B cell (primary cell): ENCODE measurements at regions of chr21 and their contacts with region 1.

Region 1: DNA sequence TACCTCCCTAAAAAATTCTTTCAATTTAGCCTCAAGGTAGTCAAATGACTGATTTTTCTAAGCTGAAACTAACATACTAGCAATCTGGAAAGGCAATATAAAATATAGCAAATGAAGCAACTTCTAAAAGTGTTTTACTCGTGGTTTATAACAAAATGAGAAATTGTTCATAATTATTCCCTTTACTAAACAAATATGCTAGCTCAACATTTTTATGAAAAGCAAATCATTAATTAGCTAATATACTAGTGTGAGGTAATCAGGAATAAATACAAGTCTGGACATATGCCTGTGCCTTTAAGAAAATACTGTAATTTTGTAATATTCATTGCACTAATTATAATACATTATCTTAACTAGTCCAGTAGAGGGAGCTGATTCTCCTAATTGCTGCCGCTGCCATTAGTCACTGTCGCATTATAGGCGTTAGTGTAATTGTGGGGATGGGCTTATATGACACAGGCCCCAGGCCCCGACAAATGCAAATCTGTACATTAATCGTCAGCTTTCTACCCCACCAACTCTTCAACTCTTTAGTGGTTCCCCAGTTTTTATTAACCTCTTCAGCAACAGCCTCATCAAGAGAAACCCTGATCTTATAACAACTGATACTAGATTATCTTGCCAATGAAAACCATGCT is 160.9 kb downstream of the GABPA start:
- DNase-seq: peak; percentile 59
- ATAC-seq: peak; percentile 67
- H3K4me3 ChIP-seq: no peak overlapping the region
- H3K4me3 Mint-ChIP-seq: no peak overlapping the region
- H3K27ac ChIP-seq: no peak overlapping the region
- H3K27ac Mint-ChIP-seq: no peak overlapping the region
- H3K4me1 ChIP-seq: no peaks in the 10 kb centered on the region
- H3K4me1 Mint-ChIP-seq: peaks cover 3% of the 10 kb centered on the region
- H3K27me3 ChIP-seq: no peaks in the 10 kb centered on the region
- H3K27me3 Mint-ChIP-seq: no peaks in the 10 kb centered on the region
- CTCF ChIP-seq: peak; percentile 83

Region 2: DNA sequence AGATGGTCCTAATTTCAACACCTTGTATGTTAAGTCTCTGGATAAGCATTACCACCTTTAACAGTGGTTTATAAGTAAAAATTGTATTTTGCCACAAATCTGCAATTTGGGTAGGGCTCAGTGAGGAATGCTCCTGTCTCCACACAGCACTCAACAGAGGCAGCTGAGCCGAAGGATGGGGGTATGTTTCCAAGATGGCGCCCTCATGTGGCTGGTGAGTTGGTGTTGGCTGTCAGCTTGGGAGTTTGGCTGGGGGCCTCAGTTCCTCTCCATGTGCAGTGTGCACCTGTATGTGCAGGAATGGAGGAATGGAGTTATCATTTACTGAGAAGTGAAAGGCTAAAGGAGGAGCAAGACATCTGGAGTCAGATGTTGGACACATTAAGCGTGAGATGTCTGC is 24.1 kb before region 1 on chr21:
- CTCF ChIA-PET with region 1: no interaction called
- POLR2A ChIA-PET with region 1: no interaction called
- intact Hi-C with region 1: no loop called
- DNase-seq: no peak
- ATAC-seq: no peak
- H3K4me3 ChIP-seq: no peak overlapping the region
- H3K4me3 Mint-ChIP-seq: no peak overlapping the region
- H3K27ac ChIP-seq: no peak overlapping the region
- H3K27ac Mint-ChIP-seq: no peak overlapping the region
- H3K4me1 ChIP-seq: no peaks in the 10 kb centered on the region
- H3K4me1 Mint-ChIP-seq: no peaks in the 10 kb centered on the region
- H3K27me3 ChIP-seq: no peaks in the 10 kb centered on the region
- H3K27me3 Mint-ChIP-seq: no peaks in the 10 kb centered on the region
- CTCF ChIP-seq: no peak

Region 3: DNA sequence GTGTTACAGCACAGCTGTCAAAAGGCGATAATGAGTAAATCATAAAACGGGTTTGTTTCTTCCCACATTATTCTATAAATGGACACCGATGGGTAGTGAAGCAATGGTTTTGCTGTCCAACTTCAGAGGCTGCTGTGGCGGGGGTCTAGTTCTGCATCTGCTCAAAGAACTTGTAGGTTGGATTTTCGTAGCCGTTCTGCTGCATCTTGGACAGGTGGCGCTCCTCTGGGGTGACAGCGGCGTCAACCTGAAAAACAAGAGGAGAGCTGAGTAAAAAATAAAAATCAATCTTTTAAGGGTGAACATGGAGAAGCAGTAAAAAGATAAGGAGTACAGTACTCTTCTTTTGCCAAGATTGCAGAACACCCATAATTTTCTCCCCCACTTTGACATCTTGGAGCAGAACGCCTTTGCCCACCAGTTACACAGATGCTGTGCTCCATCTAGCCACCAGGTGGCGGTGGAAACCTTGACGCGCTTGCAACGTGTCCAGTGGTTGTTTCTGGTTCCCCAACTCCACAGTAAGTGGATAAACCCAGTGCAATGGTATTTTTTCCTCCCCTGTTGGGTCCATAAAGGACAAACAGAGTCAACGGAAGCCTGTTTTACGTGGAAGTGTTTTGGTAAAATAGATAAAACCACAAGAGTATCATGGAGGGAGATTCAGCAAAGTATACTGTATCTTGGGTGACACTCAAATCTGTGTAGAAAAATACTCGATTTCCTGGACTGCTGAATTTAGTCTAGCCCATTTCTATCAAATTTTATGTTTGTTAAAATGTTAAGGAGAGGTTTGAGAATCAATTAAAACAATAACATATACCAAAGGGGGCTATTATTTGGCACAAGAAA is 13.9 kb before region 1 on chr21:
- CTCF ChIA-PET with region 1: interaction called, 14 read pairs
- POLR2A ChIA-PET with region 1: no interaction called
- intact Hi-C with region 1: no loop called
- DNase-seq: peak; percentile 69
- ATAC-seq: peak; percentile 86
- H3K4me3 ChIP-seq: no peak overlapping the region
- H3K4me3 Mint-ChIP-seq: no peak overlapping the region
- H3K27ac ChIP-seq: no peak overlapping the region
- H3K27ac Mint-ChIP-seq: no peak overlapping the region
- H3K4me1 ChIP-seq: no peaks in the 10 kb centered on the region
- H3K4me1 Mint-ChIP-seq: no peaks in the 10 kb centered on the region
- H3K27me3 ChIP-seq: no peaks in the 10 kb centered on the region
- H3K27me3 Mint-ChIP-seq: no peaks in the 10 kb centered on the region
- CTCF ChIP-seq: peak; percentile 99

Region 4: GRCh38 chr21:25967573-25968438 is 72.1 kb after region 1 on chr21:
- CTCF ChIA-PET with region 1: interaction called, 10 read pairs
- POLR2A ChIA-PET with region 1: no interaction called
- intact Hi-C with region 1: loop called (anchors 5 kb)
- DNase-seq: peak; percentile 78
- ATAC-seq: peak; percentile 94
- H3K4me3 ChIP-seq: peak overlapping the region in 1 of 5 experiments; percentile 45
- H3K4me3 Mint-ChIP-seq: peak overlapping the region; percentile 80
- H3K27ac ChIP-seq: peak overlapping the region; percentile 76 to 95
- H3K27ac Mint-ChIP-seq: peak overlapping the region; percentile 99
- H3K4me1 ChIP-seq: peaks cover 26 to 32% of the 10 kb centered on the region in 2 donors
- H3K4me1 Mint-ChIP-seq: peaks cover 32% of the 10 kb centered on the region
- H3K27me3 ChIP-seq: no peaks in the 10 kb centered on the region
- H3K27me3 Mint-ChIP-seq: no peaks in the 10 kb centered on the region
- CTCF ChIP-seq: no peak

Region 5: GRCh38 chr21:25999921-26000582 is 104.4 kb after region 1 on chr21:
- CTCF ChIA-PET with region 1: interaction called, 4 read pairs
- POLR2A ChIA-PET with region 1: no interaction called
- intact Hi-C with region 1: loop called (anchors 2 kb)
- DNase-seq: peak; percentile 13
- ATAC-seq: no peak
- H3K4me3 ChIP-seq: peak overlapping the region in 1 of 5 experiments; percentile 21
- H3K4me3 Mint-ChIP-seq: peak overlapping the region; percentile 59
- H3K27ac ChIP-seq: no peak overlapping the region
- H3K27ac Mint-ChIP-seq: no peak overlapping the region
- H3K4me1 ChIP-seq: no peaks in the 10 kb centered on the region
- H3K4me1 Mint-ChIP-seq: peaks cover 8% of the 10 kb centered on the region
- H3K27me3 ChIP-seq: no peaks in the 10 kb centered on the region
- H3K27me3 Mint-ChIP-seq: no peaks in the 10 kb centered on the region
- CTCF ChIP-seq: no peak

Region 6: GRCh38 chr21:26032263-26032662 is 136.6 kb after region 1 on chr21:
- CTCF ChIA-PET with region 1: interaction called, 12 read pairs
- POLR2A ChIA-PET with region 1: no interaction called
- intact Hi-C with region 1: no loop called
- DNase-seq: no peak
- ATAC-seq: no peak
- H3K4me3 ChIP-seq: no peak overlapping the region
- H3K4me3 Mint-ChIP-seq: no peak overlapping the region
- H3K27ac ChIP-seq: no peak overlapping the region
- H3K27ac Mint-ChIP-seq: no peak overlapping the region
- H3K4me1 ChIP-seq: no peaks in the 10 kb centered on the region
- H3K4me1 Mint-ChIP-seq: no peaks in the 10 kb centered on the region
- H3K27me3 ChIP-seq: no peaks in the 10 kb centered on the region
- H3K27me3 Mint-ChIP-seq: no peaks in the 10 kb centered on the region
- CTCF ChIP-seq: no peak

Region 7: GRCh38 chr21:26715878-26716506 is 820.3 kb after region 1 on chr21:
- CTCF ChIA-PET with region 1: interaction called, 14 read pairs
- POLR2A ChIA-PET with region 1: no interaction called
- intact Hi-C with region 1: loop called (anchors 5 kb)
- DNase-seq: peak; percentile 29
- ATAC-seq: no peak
- H3K4me3 ChIP-seq: no peak overlapping the region
- H3K4me3 Mint-ChIP-seq: no peak overlapping the region
- H3K27ac ChIP-seq: no peak overlapping the region
- H3K27ac Mint-ChIP-seq: no peak overlapping the region
- H3K4me1 ChIP-seq: no peaks in the 10 kb centered on the region
- H3K4me1 Mint-ChIP-seq: no peaks in the 10 kb centered on the region
- H3K27me3 ChIP-seq: no peaks in the 10 kb centered on the region
- H3K27me3 Mint-ChIP-seq: peaks cover 12% of the 10 kb centered on the region
- CTCF ChIP-seq: peak; percentile 68